ENCODE measurements at regions of chr5 and their contacts with region 1.

Region 1: GRCh38 chr5:1380011-1380817 is 35.3 kb upstream of the CLPTM1L start:
- DNase-seq: peak; percentile 51
- H3K4me3 Mint-ChIP-seq: peak overlapping the region; percentile 34
- H3K27ac Mint-ChIP-seq: no peak overlapping the region
- H3K4me1 Mint-ChIP-seq: peaks cover 17% of the 10 kb centered on the region
- H3K27me3 Mint-ChIP-seq: peaks cover 3% of the 10 kb centered on the region

Region 2: GRCh38 chr5:1354491-1355033 is 25.7 kb before region 1 on chr5:
- CTCF ChIA-PET with region 1: interaction called, 10 read pairs
- POLR2A ChIA-PET with region 1: interaction called, 3 read pairs
- DNase-seq: no peak
- H3K4me3 Mint-ChIP-seq: no peak overlapping the region
- H3K27ac Mint-ChIP-seq: no peak overlapping the region
- H3K4me1 Mint-ChIP-seq: no peaks in the 10 kb centered on the region
- H3K27me3 Mint-ChIP-seq: peaks cover 2% of the 10 kb centered on the region